ENCODE measurements at regions of chr9 and their contacts with region 1.

Region 1: DNA sequence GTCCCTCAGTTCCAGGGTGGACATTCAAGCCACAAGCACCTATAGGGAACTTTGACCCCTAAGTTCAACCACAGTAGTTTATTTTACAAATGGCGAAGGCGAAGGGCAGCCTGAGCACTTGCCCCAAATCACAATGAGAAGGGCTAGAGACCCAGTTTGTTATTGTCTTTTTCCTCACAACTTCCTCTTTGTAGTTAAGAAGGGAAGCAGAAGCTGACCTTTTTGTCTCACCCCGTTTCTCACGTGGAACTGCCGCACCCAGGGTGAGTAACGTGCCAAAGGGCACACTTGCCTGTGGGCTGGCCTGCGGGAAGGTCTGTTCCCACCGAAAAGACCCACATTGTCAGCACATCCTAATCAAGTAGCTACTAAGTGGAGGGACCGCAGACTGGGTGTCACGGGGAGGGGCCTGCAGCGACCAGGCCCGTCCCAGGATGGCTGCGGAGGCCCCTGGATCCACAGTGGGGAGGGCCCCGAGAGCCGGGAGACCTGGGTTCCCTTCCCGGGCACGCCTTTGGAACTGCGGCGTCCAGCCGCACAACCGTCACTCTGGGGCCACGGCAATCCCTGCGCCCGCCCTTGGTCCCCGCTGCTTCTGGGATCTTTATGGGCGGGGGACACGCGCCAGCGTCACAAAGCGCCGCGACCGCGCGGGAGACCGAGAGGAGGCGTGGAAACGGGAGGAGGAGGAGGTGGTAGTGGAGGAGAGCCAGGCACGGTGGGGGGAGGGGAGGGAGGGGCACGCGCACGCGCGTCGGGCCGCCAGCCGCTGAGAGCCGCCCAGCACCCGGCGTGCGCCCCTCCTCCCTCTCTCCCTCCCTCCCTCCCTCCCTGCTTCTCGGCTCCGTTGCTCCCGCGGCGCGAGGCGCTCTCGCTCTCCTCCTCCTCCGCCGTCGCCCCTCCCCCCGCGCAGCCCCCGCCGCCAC is at the start of gene UBE2R2:
- DNase-seq: peak; percentile 81 to 94 (median 90)
- ATAC-seq: peak; percentile 86
- H3K4me3 ChIP-seq: peak within 1 kb of the TSS; percentile 88
- H3K4me3 Mint-ChIP-seq: peak within 1 kb of the TSS; percentile 83 to 98 (median 93)
- H3K27ac ChIP-seq: peak within 1 kb of the TSS; percentile 96
- H3K27ac Mint-ChIP-seq: peak within 1 kb of the TSS; percentile 91 to 99 (median 97)
- H3K4me1 ChIP-seq: peaks cover 19 to 21% of the 10 kb centered on the region in 2 donors
- H3K4me1 Mint-ChIP-seq: peaks cover 24 to 60% (median 54%) of the 10 kb centered on the region in 7 donors
- H3K27me3 ChIP-seq: no peaks in the 10 kb centered on the region
- H3K27me3 Mint-ChIP-seq: no peaks in the 10 kb centered on the region
- total RNA-seq, gene UBE2R2: 27.2 to 40.8 (median 32.0) TPM

Region 2: DNA sequence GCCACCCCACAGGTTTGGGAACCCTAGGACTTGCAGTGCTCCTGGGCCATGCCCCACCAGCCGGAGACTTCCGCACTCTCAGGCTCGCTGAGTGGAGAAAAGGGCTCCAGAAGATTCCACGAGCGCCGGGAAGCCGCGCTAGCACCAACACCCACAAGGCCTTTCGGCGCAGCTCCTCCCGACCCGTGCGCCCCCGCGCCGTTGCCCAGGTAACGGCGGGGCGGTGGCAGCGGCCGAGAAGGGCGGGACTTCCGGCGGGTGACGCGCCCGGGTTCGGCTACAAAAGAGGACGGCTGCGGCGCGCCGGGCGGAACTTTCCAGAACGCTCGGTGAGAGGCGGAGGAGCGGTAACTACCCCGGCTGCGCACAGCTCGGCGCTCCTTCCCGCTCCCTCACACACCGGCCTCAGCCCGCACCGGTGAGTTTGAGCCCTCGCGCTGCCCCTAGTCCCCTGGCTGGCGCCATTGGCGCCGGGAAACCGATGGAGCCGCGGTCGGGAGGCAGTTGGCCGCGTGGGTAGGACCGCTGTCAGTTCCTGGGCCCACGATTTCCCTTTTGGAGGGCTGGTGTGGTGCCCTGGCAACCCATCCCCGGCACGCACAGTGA is 791.5 kb before region 1 on chr9 and contains the start of gene DNAJA1:
- CTCF ChIA-PET with region 1: no interaction called
- POLR2A ChIA-PET with region 1: no interaction called
- intact Hi-C with region 1: loop called in 1 of 2 experiments (anchors 5 kb)
- DNase-seq: peak; percentile 92 to 99 (median 97)
- ATAC-seq: peak; percentile 91
- H3K4me3 ChIP-seq: peak within 1 kb of the TSS; percentile 98
- H3K4me3 Mint-ChIP-seq: peak within 1 kb of the TSS; percentile 91 to 99 (median 96)
- H3K27ac ChIP-seq: peak within 1 kb of the TSS; percentile 100
- H3K27ac Mint-ChIP-seq: peak within 1 kb of the TSS; percentile 82 to 98 (median 95)
- H3K4me1 ChIP-seq: peaks cover 37 to 49% of the 10 kb centered on the region in 2 donors
- H3K4me1 Mint-ChIP-seq: peaks cover 51 to 83% (median 78%) of the 10 kb centered on the region in 7 donors
- H3K27me3 ChIP-seq: no peaks in the 10 kb centered on the region
- H3K27me3 Mint-ChIP-seq: no peaks in the 10 kb centered on the region
- total RNA-seq, gene DNAJA1: 66.8 to 204 (median 119) TPM

Region 3: GRCh38 chr9:33473643-33474352 is 342.8 kb before region 1 on chr9 and contains the start of gene NOL6:
- CTCF ChIA-PET with region 1: no interaction called
- POLR2A ChIA-PET with region 1: no interaction called
- intact Hi-C with region 1: loop called (anchors 5 kb)
- DNase-seq: peak; percentile 91 to 99 (median 98)
- ATAC-seq: peak; percentile 100
- H3K4me3 ChIP-seq: peak within 1 kb of the TSS; percentile 88
- H3K4me3 Mint-ChIP-seq: peak within 1 kb of the TSS; percentile 88 to 100 (median 97)
- H3K27ac ChIP-seq: peak within 1 kb of the TSS; percentile 78
- H3K27ac Mint-ChIP-seq: peak within 1 kb of the TSS; percentile 88 to 99 (median 96)
- H3K4me1 ChIP-seq: peaks cover 13 to 19% of the 10 kb centered on the region in 2 donors
- H3K4me1 Mint-ChIP-seq: peaks cover 9 to 38% (median 31%) of the 10 kb centered on the region in 7 donors
- H3K27me3 ChIP-seq: no peaks in the 10 kb centered on the region
- H3K27me3 Mint-ChIP-seq: no peaks in the 10 kb centered on the region
- total RNA-seq, gene NOL6: 34.0 to 48.0 (median 44.0) TPM

Region 4: DNA sequence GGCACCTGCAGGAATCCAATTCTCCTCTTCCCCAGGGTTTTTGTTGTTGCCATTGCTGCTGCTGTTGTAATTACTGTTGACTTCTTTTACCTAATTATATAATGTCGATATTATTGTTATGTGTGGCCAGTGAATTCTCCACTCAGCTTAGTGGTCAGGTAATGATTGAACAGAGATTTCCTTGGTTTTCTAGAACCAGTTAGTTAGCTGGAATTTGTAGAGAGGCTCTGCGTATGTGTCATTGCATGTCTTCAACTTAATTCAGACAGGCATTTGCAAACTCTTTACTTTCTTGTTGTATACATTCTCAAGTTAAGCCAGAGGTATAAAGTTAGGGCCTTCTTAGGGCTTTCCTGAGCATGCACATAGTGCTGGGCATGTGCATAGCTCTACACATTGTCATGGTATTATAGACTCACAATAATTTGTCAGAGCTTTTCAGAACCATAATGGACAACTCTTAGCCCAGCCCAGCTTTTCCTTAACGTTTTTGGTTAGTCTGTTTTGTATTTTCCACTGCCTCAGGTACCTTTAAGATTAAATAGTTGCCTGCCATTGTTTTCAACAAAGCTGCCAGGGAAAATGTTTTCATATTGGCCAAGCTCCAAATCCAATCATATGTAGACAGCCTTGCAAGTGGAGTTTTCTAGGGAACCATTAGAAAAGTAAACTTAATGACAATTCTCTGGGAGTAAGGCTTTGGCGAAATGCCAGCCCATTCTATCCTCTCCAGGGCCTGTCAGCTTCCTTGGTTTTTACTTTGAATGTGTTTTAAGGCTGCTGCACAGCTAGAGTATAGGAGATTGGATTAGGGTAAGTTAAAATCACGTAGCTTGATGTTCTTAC is 68.5 kb after region 1 on chr9:
- CTCF ChIA-PET with region 1: no interaction called
- POLR2A ChIA-PET with region 1: no interaction called
- intact Hi-C with region 1: no loop called
- DNase-seq: no peak
- ATAC-seq: no peak
- H3K4me3 ChIP-seq: no peak overlapping the region
- H3K4me3 Mint-ChIP-seq: peak overlapping the region in 1 of 10 donors; percentile 23
- H3K27ac ChIP-seq: no peak overlapping the region
- H3K27ac Mint-ChIP-seq: peak overlapping the region in 7 of 9 donors; percentile 15 to 70 (median 59)
- H3K4me1 ChIP-seq: no peaks in the 10 kb centered on the region
- H3K4me1 Mint-ChIP-seq: peaks cover 18 to 54% (median 44%) of the 10 kb centered on the region in 7 donors
- H3K27me3 ChIP-seq: no peaks in the 10 kb centered on the region
- H3K27me3 Mint-ChIP-seq: no peaks in the 10 kb centered on the region

Region 5: DNA sequence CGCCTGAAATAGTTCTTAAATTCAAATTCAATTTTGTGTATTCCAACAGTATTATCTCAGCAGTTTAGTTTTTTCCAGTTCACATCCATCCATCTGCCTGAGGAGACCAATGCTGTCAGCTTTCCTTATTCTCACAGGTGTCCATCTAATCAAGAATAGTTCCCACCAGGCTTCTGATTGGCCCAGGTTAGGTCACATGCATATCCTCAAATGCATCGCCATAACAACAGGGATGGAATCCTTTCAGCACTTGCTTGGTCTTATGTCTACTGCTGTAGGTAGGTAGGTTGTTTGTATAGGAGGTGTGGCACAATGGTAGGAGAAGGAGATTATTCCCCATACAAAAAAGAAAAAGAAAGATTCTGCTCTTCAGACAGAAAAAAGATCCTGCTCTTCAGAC is 91.5 kb after region 1 on chr9:
- CTCF ChIA-PET with region 1: no interaction called
- POLR2A ChIA-PET with region 1: no interaction called
- intact Hi-C with region 1: loop called in 1 of 2 experiments (anchors 5 kb)
- DNase-seq: no peak
- ATAC-seq: no peak
- H3K4me3 ChIP-seq: no peak overlapping the region
- H3K4me3 Mint-ChIP-seq: peak overlapping the region in 1 of 10 donors; percentile 28
- H3K27ac ChIP-seq: no peak overlapping the region
- H3K27ac Mint-ChIP-seq: peak overlapping the region in 6 of 9 donors; percentile 3 to 60 (median 31)
- H3K4me1 ChIP-seq: no peaks in the 10 kb centered on the region
- H3K4me1 Mint-ChIP-seq: peaks cover 13 to 31% (median 24%) of the 10 kb centered on the region in 7 donors
- H3K27me3 ChIP-seq: no peaks in the 10 kb centered on the region
- H3K27me3 Mint-ChIP-seq: no peaks in the 10 kb centered on the region

Region 6: DNA sequence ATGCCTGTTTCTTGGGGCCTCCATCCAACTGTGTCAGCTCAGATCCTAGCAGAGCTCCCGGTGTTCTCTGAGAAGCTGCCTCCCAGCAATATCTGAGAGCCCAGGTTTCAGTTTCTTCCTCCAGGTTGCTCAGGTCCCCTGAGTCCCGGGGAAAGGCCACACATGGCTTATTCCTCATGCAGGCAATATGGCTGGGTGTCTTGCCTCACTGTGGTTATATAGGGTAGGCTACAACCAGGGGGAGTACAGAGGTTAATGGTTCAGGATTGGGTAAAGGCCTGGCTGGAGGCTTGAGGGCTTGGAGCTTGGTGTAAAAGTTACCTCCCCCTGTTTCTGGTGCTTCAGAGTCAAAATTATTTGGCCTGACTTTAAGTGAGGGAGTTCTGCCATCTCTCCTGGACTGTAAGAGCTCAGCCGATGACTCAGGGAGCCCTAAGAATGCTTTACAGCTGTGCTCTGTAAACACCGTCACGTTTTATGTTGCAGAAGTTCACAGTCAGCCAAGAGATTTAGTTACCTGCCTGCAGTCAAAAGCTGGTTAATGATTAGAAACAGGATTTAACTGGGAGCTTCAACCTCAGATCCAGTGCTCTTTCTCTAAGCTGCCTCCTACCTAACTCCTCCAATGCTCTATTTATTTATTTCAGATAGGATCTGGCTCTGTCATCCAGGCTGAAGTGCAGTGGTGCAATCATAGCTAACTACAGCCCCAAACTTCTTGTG is 256.4 kb after region 1 on chr9:
- CTCF ChIA-PET with region 1: no interaction called
- POLR2A ChIA-PET with region 1: no interaction called
- intact Hi-C with region 1: loop called in 1 of 2 experiments (anchors 1 kb)
- DNase-seq: no peak
- ATAC-seq: no peak
- H3K4me3 ChIP-seq: no peak overlapping the region
- H3K4me3 Mint-ChIP-seq: no peak overlapping the region
- H3K27ac ChIP-seq: no peak overlapping the region
- H3K27ac Mint-ChIP-seq: peak overlapping the region in 3 of 9 donors; percentile 28 to 62 (median 45)
- H3K4me1 ChIP-seq: no peaks in the 10 kb centered on the region
- H3K4me1 Mint-ChIP-seq: peaks cover 0 to 12% (median 0%) of the 10 kb centered on the region in 7 donors
- H3K27me3 ChIP-seq: no peaks in the 10 kb centered on the region
- H3K27me3 Mint-ChIP-seq: no peaks in the 10 kb centered on the region

Region 7: DNA sequence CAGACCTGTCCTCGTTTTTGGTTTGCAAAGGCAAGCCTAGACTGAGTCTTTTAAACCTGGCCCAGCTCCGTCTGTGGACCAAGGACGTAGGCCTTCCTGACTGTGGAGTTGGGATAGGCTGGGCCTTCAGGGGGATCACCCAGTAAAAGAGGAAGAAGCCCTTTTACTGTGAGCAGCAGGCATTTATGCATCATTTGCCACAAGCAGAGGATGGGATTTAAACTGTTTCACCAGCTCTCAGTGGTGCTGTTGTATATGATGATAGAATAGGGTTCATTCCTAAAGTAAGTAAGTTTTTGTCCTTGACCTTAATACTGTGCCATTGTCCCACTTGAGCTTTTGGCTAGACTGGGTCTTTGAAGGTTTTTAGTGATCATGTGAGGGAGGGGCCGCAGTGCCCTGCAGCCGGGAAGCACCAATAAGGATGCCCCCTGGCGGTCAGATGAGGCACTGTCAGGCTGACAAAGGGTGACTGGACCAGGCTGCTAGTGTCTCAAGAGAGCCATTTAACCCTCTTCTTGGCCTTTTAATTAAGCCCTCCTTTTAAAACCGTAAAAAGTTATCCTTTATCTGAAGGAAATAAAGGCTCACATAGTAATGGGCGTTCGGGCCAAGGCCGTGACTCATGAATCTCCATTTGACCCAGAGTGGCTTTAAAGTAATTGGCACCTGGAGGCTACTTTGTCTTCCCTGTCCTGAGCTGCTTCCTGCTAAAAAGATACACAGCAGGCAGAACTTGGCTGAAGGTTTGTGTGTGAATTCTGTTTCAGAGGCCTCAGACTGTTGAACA is 436.3 kb after region 1 on chr9:
- CTCF ChIA-PET with region 1: no interaction called
- POLR2A ChIA-PET with region 1: no interaction called
- intact Hi-C with region 1: loop called in 1 of 2 experiments (anchors 2 kb)
- DNase-seq: peak; percentile 38 to 70 (median 56)
- ATAC-seq: peak; percentile 85
- H3K4me3 ChIP-seq: no peak overlapping the region
- H3K4me3 Mint-ChIP-seq: no peak overlapping the region
- H3K27ac ChIP-seq: no peak overlapping the region
- H3K27ac Mint-ChIP-seq: peak overlapping the region in 7 of 9 donors; percentile 15 to 69 (median 46)
- H3K4me1 ChIP-seq: peaks cover 0 to 6% of the 10 kb centered on the region in 2 donors
- H3K4me1 Mint-ChIP-seq: peaks cover 9 to 21% (median 17%) of the 10 kb centered on the region in 7 donors
- H3K27me3 ChIP-seq: no peaks in the 10 kb centered on the region
- H3K27me3 Mint-ChIP-seq: no peaks in the 10 kb centered on the region

Region 8: GRCh38 chr9:34611829-34612630 is 795.4 kb after region 1 on chr9 and contains the start of gene RPP25L:
- CTCF ChIA-PET with region 1: no interaction called
- POLR2A ChIA-PET with region 1: no interaction called
- intact Hi-C with region 1: loop called in 1 of 2 experiments (anchors 5 kb)
- DNase-seq: peak; percentile 75 to 94 (median 86)
- ATAC-seq: peak; percentile 96
- H3K4me3 ChIP-seq: peak within 1 kb of the TSS; percentile 89
- H3K4me3 Mint-ChIP-seq: peak within 1 kb of the TSS; percentile 84 to 96 (median 90)
- H3K27ac ChIP-seq: peak within 1 kb of the TSS; percentile 87
- H3K27ac Mint-ChIP-seq: peak within 1 kb of the TSS; percentile 84 to 96 (median 93)
- H3K4me1 ChIP-seq: peaks cover 10 to 17% of the 10 kb centered on the region in 2 donors
- H3K4me1 Mint-ChIP-seq: peaks cover 6 to 28% (median 21%) of the 10 kb centered on the region in 7 donors
- H3K27me3 ChIP-seq: no peaks in the 10 kb centered on the region
- H3K27me3 Mint-ChIP-seq: no peaks in the 10 kb centered on the region
- total RNA-seq, gene RPP25L: 8.8 to 27.3 (median 25.1) TPM

Measured in naive thymus-derived CD4-positive, alpha-beta T cell (primary cell).